Caco-2 (cell line): ENCODE measurements at regions of chr1 and their contacts with region 1.

Region 1: GRCh38 chr1:224300314-224300713 is 29.7 kb downstream of the NVL start:
- DNase-seq: no peak
- H3K4me3 ChIP-seq: no peak overlapping the region
- H3K4me3 Mint-ChIP-seq: no peak overlapping the region
- H3K27ac Mint-ChIP-seq: no peak overlapping the region
- H3K4me1 ChIP-seq: no peaks in the 10 kb centered on the region
- H3K4me1 Mint-ChIP-seq: no peaks in the 10 kb centered on the region
- H3K27me3 ChIP-seq: no peaks in the 10 kb centered on the region
- H3K27me3 Mint-ChIP-seq: no peaks in the 10 kb centered on the region
- CTCF ChIP-seq: no peak

Region 2: DNA sequence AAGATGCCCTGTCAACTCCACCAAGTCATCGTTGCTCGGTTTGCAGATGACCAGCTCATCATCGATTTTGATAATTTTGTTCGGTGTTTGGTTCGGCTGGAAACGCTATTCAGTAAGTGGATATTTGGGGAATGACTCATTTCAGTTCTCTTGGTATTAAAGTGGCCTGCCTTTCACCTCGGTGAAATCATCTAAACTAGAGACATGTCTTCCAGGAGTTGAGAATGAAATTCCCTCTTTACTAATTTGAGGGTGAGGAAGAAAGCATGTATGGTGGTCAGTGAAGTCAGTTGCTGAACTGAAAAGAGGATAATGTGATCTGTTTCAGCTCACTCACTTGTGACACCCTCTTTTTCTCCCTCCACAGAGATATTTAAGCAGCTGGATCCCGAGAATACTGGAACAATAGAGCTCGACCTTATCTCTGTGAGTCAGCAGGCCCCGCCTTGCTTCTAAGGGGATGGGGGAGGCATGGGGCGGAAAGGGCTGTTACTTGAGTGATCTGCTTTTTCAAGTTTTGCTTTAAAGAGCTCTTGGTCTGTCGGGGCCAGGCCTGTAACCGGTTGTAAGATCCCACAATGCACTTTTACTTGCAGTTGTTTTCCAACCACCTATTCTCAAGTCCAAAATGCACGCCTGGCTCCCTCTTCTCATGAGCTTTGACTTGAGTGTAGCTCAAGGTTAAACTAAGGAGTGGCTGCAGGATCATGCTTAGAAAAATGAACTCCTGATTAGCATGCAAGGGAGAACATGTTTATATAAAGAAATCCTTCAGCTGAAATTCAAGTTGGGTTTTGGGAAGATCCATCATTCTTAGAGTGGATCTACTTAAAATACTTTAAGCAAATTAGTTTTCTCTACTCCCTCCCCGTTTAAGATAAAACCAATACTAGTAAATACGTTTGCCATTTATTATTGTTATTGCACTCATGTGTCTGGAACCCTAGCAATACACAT is 528.2 kb before region 1 on chr1:
- CTCF ChIA-PET with region 1: interaction called, 10 read pairs
- POLR2A ChIA-PET with region 1: no interaction called
- intact Hi-C with region 1: no loop called
- DNase-seq: peak; percentile 74 to 83
- H3K4me3 ChIP-seq: no peak overlapping the region
- H3K4me3 Mint-ChIP-seq: peak overlapping the region; percentile 56
- H3K27ac Mint-ChIP-seq: peak overlapping the region; percentile 88
- H3K4me1 ChIP-seq: peaks cover 55% of the 10 kb centered on the region
- H3K4me1 Mint-ChIP-seq: peaks cover 53% of the 10 kb centered on the region
- H3K27me3 ChIP-seq: no peaks in the 10 kb centered on the region
- H3K27me3 Mint-ChIP-seq: no peaks in the 10 kb centered on the region
- CTCF ChIP-seq: no peak

Region 3: DNA sequence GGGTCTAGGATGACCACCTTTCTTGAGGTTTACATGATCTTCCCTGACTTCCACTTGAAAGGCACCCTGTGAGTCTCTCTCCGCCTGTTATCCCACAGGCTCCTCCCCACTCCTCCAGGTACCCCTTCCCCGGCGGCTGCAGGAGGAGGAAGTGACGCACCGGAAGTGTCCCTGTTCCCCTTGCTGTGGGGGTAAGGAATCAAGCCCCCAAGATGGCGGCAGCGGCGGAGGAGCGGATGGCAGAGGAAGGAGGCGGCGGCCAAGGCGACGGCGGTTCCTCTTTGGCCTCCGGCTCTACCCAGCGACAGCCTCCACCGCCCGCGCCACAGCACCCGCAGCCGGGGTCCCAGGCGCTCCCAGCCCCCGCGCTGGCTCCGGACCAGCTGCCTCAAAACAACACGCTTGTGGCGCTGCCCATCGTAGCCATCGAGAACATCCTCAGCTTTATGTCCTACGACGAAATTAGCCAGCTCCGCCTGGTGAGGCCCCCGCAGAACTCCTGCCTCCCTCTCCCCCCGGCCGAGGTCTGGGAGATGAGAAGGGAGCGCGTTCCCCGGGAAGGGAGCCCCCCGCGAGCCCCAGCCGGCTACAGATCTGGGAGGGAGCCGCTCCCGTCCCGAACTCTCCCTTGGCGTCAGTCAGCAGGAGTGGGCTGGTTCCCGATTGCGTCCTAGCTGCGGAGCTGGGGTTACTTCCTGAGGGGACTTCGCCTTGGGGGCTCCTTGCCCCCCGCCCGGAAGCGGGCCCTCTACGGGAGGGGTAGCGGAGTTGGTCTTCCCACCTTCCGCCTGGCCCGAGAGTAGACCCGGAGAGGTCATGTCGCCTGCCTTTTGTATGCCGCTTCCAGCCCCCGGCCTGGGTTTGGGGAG is 186.2 kb before region 1 on chr1 and contains the start of gene FBXO28:
- CTCF ChIA-PET with region 1: no interaction called
- POLR2A ChIA-PET with region 1: no interaction called
- intact Hi-C with region 1: no loop called
- DNase-seq: peak; percentile 93 to 96
- H3K4me3 ChIP-seq: peak within 1 kb of the TSS; percentile 92
- H3K4me3 Mint-ChIP-seq: peak within 1 kb of the TSS; percentile 75
- H3K27ac Mint-ChIP-seq: peak within 1 kb of the TSS; percentile 63
- H3K4me1 ChIP-seq: peaks cover 8% of the 10 kb centered on the region; the same call in 1 of the 2 replicates
- H3K4me1 Mint-ChIP-seq: no peaks in the 10 kb centered on the region
- H3K27me3 ChIP-seq: no peaks in the 10 kb centered on the region
- H3K27me3 Mint-ChIP-seq: no peaks in the 10 kb centered on the region
- CTCF ChIP-seq: no peak
- total RNA-seq, gene FBXO28: 31.3 and 36.7 TPM in 2 replicates

Region 4: DNA sequence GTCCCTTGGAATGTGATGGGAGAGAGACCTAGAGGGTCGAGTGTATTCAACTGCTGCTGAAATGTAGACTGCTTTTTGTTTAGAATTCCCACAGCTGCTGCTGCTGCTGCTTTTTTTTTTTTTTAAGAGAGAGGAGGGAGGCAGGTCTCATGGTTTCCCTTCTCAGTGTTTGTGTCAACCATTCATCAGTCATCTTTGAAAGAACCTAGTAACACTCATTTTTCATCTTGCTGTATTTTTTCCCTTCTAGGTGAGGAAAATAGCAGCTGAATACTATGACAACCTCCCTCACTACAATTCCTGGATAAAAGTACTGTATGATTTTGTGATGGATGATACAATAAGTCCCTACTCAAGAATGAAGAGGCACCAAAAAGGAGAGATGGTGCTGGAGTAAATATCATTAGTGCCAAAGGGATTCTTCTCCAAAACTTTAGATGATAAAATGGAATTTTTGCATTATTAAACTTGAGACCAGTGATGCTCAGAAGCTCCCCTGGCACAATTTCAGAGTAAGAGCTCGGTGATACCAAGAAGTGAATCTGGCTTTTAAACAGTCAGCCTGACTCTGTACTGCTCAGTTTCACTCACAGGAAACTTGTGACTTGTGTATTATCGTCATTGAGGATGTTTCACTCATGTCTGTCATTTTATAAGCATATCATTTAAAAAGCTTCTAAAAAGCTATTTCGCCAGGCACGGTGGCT is 108.1 kb before region 1 on chr1:
- CTCF ChIA-PET with region 1: no interaction called
- POLR2A ChIA-PET with region 1: no interaction called
- intact Hi-C with region 1: no loop called
- DNase-seq: no peak
- H3K4me3 ChIP-seq: no peak overlapping the region
- H3K4me3 Mint-ChIP-seq: no peak overlapping the region
- H3K27ac Mint-ChIP-seq: no peak overlapping the region
- H3K4me1 ChIP-seq: peaks cover 17% of the 10 kb centered on the region
- H3K4me1 Mint-ChIP-seq: no peaks in the 10 kb centered on the region
- H3K27me3 ChIP-seq: no peaks in the 10 kb centered on the region
- H3K27me3 Mint-ChIP-seq: no peaks in the 10 kb centered on the region
- CTCF ChIP-seq: no peak

Region 5: GRCh38 chr1:224266105-224266935 is 34.0 kb before region 1 on chr1:
- CTCF ChIA-PET with region 1: no interaction called
- POLR2A ChIA-PET with region 1: no interaction called
- intact Hi-C with region 1: no loop called
- DNase-seq: no peak
- H3K4me3 ChIP-seq: no peak overlapping the region
- H3K4me3 Mint-ChIP-seq: no peak overlapping the region
- H3K27ac Mint-ChIP-seq: no peak overlapping the region
- H3K4me1 ChIP-seq: no peaks in the 10 kb centered on the region
- H3K4me1 Mint-ChIP-seq: peaks cover 8% of the 10 kb centered on the region
- H3K27me3 ChIP-seq: no peaks in the 10 kb centered on the region
- H3K27me3 Mint-ChIP-seq: no peaks in the 10 kb centered on the region
- CTCF ChIP-seq: no peak